MCF 10A (cell line): ENCODE measurements at regions of chrX and their contacts with region 1.

Region 1: DNA sequence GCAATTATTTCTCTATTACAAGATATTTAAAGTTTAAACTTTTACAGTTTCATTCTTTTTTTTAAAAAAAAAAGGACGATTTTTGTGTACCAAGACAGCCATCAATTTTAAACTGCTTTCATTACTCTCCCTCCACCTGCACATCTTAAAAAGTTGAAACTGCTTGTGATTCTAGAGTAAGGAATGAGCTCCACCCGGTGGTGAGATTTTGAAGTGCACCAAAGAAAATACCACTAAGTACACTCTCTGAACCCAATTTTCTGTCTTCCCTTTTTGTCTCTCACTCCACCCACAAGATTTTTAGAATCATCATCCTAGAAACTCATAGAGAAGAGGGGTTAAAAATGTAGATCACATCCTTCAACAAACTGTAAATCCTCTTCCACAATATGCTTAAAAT is 91.3 kb upstream of the WDR44 start:
- DNase-seq: peak; percentile 57
- H3K4me3 Mint-ChIP-seq: no peak overlapping the region
- H3K27ac Mint-ChIP-seq: no peak overlapping the region
- H3K4me1 Mint-ChIP-seq: no peaks in the 10 kb centered on the region
- H3K27me3 Mint-ChIP-seq: peaks cover 31% of the 10 kb centered on the region
- CTCF ChIP-seq: peak; percentile 59

Region 2: GRCh38 chrX:117996918-117997480 is 257.6 kb before region 1 on chrX:
- CTCF ChIA-PET with region 1: interaction called, 9 read pairs
- POLR2A ChIA-PET with region 1: interaction called, 4 read pairs
- intact Hi-C with region 1: loop called (anchors 1 kb)
- DNase-seq: peak; percentile 59
- H3K4me3 Mint-ChIP-seq: no peak overlapping the region
- H3K27ac Mint-ChIP-seq: no peak overlapping the region
- H3K4me1 Mint-ChIP-seq: peaks cover 17% of the 10 kb centered on the region
- H3K27me3 Mint-ChIP-seq: no peaks in the 10 kb centered on the region
- CTCF ChIP-seq: peak; percentile 54

Region 3: DNA sequence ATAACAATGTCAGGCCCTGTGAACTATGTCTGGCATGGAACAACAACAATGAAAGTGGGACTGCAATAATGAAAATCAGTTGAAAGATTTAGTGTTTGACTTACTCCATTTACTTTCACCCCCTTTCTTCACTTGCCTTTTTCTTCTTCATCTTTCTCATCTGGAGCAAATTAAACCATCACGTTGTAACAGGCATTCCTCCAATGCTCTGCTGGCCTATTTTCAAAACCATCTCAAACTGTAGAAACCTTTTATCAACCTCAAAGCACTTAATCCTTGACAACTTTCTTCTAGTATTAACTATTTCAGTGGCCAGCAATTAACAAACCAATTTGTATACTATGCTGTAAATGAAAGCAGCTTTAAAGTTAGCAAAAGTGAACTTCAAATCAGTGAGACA is 146.3 kb before region 1 on chrX:
- CTCF ChIA-PET with region 1: no interaction called
- POLR2A ChIA-PET with region 1: no interaction called
- intact Hi-C with region 1: no loop called
- DNase-seq: no peak
- H3K4me3 Mint-ChIP-seq: no peak overlapping the region
- H3K27ac Mint-ChIP-seq: no peak overlapping the region
- H3K4me1 Mint-ChIP-seq: no peaks in the 10 kb centered on the region
- H3K27me3 Mint-ChIP-seq: peaks cover 5% of the 10 kb centered on the region
- CTCF ChIP-seq: no peak

Region 4: GRCh38 chrX:118189628-118190027 is 65.0 kb before region 1 on chrX:
- CTCF ChIA-PET with region 1: no interaction called
- POLR2A ChIA-PET with region 1: no interaction called
- intact Hi-C with region 1: no loop called
- DNase-seq: no peak
- H3K4me3 Mint-ChIP-seq: no peak overlapping the region
- H3K27ac Mint-ChIP-seq: no peak overlapping the region
- H3K4me1 Mint-ChIP-seq: no peaks in the 10 kb centered on the region
- H3K27me3 Mint-ChIP-seq: peaks cover 21% of the 10 kb centered on the region
- CTCF ChIP-seq: no peak

Region 5: DNA sequence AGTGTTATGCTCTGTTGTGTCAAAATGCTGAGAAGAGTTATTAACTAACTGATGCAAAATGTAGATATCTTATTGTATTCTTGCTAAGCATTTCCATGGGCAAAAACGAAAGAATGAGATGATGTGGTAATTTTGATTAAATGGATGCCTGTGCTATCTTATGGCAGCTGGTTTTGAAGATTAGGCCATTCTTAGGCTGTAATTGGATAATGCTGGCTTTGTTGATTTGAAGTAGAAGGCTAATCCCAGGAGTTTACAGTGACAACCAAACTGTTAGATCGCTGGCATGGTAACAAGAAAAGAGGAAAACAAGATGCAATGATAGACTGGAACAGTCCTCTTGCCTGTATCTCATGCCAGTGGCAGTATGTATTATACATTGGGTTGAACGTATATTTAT is 17.2 kb after region 1 on chrX:
- CTCF ChIA-PET with region 1: interaction called, 10 read pairs
- POLR2A ChIA-PET with region 1: no interaction called
- intact Hi-C with region 1: no loop called
- DNase-seq: no peak
- H3K4me3 Mint-ChIP-seq: no peak overlapping the region
- H3K27ac Mint-ChIP-seq: no peak overlapping the region
- H3K4me1 Mint-ChIP-seq: no peaks in the 10 kb centered on the region
- H3K27me3 Mint-ChIP-seq: no peaks in the 10 kb centered on the region
- CTCF ChIP-seq: no peak